ENCODE measurements at regions of chr1 and their contacts with region 1.

Region 1: DNA sequence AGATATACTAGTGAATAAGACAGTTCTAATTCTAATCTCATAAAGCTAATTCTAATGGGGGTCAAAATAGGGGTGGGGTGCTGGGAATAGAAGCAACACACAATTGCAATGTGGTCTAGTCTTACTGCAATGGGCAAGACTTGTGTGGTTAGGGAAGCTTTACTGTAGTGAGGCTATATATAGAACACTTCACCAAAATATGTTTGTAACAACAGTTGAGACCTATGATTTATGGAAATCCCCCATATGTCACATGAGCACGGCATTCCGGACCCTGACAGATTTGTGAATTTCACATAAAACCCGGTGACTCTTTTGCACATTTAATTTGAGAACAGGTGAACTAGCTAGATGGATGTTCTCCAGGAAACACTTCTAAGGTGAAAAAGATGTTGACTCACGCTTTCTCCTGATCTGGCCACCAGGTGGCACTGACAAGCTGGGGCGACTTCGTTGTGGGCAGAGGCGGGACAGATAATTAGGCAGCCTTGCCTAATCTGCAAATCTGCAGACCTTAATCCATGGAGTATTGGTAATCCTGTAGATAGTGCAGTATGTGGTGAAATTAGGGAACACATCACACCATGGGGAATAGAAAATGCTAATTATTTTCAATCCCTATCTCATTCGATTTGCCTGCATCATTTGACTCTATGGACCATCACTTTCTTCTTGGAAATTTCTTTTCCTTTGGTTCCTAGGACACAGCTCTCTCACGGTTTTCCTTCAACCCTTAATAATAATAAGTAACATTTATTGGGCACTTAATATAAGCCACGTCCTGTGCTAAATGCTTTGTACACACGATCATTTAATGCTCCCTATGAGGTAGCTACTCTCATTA is 37.7 kb downstream of the KIAA0040 start:
- DNase-seq: peak in 1 of 2 donors; percentile 82
- H3K4me3 ChIP-seq: no peak overlapping the region
- H3K27ac ChIP-seq: no peak overlapping the region
- H3K4me1 ChIP-seq: no peaks in the 10 kb centered on the region
- H3K27me3 ChIP-seq: no peaks in the 10 kb centered on the region
- CTCF ChIP-seq: peak; percentile 74 to 86 (median 81)

Region 2: DNA sequence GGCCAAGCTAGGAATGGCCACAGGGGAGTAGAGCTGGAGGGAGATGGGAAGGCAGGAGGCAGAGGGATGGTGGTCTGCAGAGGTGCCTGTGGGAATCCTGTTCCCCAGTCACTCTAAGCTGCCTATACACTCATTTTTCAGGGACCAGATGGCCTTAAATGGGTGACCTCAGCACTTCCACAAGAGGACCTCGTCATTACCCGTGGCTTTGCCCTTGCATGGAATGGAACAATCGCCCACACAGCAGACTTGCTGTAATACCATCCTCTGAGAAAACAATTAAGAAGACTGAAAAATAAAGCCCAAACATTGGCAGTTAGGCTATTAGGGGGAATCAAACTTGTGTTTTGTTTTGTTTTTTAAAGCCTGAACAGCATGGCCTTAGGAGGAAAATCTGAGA is 100.1 kb before region 1 on chr1:
- intact Hi-C with region 1: no loop called
- DNase-seq: no peak
- H3K4me3 ChIP-seq: no peak overlapping the region
- H3K27ac ChIP-seq: no peak overlapping the region
- H3K4me1 ChIP-seq: no peaks in the 10 kb centered on the region
- H3K27me3 ChIP-seq: no peaks in the 10 kb centered on the region
- CTCF ChIP-seq: no peak

Region 3: DNA sequence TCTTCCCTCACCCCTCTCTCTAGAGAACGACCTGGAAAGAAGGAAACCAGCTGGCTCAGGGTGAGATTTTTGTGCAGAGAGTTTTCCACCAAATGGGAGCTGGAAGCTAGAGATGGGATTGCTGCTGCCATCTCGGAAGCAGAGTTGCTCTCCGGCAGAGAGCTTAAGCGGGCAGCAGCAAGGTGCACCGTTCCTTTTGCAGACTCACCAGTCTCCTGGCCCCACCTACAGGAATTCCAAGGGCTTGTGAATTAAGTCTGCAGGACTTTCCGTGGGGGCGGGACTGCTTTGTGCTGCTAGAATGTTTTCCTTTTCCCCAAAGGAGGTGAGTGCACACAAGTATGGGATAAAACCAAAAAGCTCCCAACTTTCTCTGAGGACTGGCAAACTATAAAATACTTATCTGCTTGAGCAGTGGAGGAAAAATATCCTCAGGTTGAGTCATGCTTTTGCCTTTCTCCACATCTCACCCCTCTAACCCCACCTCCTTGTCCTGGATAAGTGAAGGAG is 66.9 kb after region 1 on chr1:
- intact Hi-C with region 1: loop called (anchors 5 kb)
- DNase-seq: no peak
- H3K4me3 ChIP-seq: no peak overlapping the region
- H3K27ac ChIP-seq: no peak overlapping the region
- H3K4me1 ChIP-seq: no peaks in the 10 kb centered on the region
- H3K27me3 ChIP-seq: no peaks in the 10 kb centered on the region
- CTCF ChIP-seq: no peak

Region 4: GRCh38 chr1:175319418-175320230 is 164.8 kb after region 1 on chr1:
- intact Hi-C with region 1: loop called (anchors 1 kb)
- DNase-seq: peak in 1 of 2 donors; percentile 83
- H3K4me3 ChIP-seq: no peak overlapping the region
- H3K27ac ChIP-seq: no peak overlapping the region
- H3K4me1 ChIP-seq: no peaks in the 10 kb centered on the region
- H3K27me3 ChIP-seq: no peaks in the 10 kb centered on the region
- CTCF ChIP-seq: peak; percentile 76 to 85 (median 78)

Region 5: GRCh38 chr1:176073524-176074157 is 918.8 kb after region 1 on chr1:
- intact Hi-C with region 1: loop called (anchors 5 kb)
- DNase-seq: no peak
- H3K4me3 ChIP-seq: no peak overlapping the region
- H3K27ac ChIP-seq: no peak overlapping the region
- H3K4me1 ChIP-seq: no peaks in the 10 kb centered on the region
- H3K27me3 ChIP-seq: no peaks in the 10 kb centered on the region
- CTCF ChIP-seq: peak; percentile 49 to 77 (median 69)

Measured in ascending aorta (tissue), 2 donors.